HEK293 (cell line): ENCODE measurements at regions of chr19 and their contacts with region 1.

Region 1: DNA sequence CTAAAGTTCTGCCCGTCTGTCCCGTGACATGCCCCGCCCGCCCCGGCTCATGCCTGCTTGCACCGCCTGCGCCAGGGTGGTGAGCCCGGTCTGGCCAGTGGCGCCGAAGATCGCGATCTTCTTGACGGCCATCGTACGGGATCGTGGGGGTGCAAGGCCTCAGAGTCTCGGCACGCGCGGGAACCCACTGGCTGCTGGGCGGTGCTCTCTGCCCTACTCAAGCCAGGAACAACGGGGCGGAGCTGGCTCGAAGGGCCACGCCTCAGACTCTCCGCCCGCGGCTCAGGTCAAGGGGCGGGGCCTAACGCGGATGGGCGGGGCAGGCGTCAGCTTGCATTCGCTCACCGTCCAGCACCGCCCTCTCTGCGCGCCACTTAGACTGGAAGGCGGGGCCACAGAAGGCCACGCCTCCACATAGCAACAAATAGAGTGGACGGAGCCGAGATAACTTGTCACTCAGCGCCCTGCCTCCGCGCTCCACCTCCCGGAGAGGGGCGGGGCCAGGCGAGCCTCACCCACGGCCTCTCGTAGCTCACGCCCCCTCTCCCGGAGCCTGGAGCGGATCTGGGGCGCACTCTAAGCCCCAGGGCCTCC is at the start of gene BLVRB:
- H3K4me3 ChIP-seq: peak within 1 kb of the TSS; percentile 53
- H3K27ac ChIP-seq: peak within 1 kb of the TSS; percentile 20; the same call in 1 of the 2 replicates
- H3K4me1 ChIP-seq: peaks cover 13% of the 10 kb centered on the region
- CTCF ChIP-seq: no peak

Region 2: DNA sequence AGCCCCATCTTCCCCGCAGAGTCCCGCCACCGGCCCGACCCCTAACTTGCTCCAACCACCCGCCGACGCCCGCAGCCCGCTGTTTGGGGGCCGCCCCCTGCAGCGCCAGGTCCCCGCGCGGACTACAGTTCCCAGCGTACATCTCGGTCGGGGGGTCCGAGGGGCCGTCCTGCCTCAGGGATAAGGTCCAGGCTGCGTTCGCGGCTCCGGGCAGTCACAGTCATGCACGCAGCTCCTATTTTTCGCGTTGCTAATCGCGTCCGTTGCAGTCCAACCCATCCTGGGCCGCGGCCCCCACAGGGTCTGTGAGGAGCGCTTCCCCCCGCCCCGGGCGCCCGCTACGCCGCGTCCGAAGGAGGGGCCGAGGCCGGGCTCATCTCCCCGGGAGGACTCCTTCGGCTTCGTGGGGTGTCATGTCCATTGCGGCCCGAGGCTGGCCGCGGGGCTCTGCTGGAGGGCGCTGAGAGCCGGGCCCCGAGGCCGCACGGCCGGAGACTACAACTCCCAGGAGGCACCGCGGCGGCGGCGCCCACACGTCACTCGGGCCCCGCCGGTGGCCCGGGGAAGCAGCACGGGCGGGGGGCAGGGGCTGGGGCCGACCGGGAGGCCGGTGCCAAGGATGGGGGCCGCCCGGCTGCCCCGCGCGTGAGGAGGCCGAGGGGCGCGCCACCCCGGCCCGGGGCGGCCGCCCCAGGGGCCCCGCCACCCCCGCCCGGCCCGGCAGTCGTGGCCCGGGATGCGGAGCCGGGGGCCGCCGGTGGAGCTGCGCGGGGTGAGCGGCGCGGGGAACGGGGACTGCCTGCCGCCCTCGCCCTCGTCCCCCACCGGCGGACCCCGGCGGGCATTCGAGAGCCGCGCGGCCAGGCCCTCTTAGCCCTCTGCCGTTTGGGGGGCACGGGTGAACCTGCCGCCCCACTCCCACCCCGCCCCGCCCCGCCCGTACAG is 274.5 kb before region 1 on chr19 and contains the start of gene MAP3K10:
- CTCF ChIA-PET with region 1: no interaction called
- POLR2A ChIA-PET with region 1: no interaction called
- H3K4me3 ChIP-seq: peak within 1 kb of the TSS; percentile 81
- H3K27ac ChIP-seq: peak within 1 kb of the TSS; percentile 99
- H3K4me1 ChIP-seq: peaks cover 19% of the 10 kb centered on the region
- CTCF ChIP-seq: peak; percentile 51; the same call in 1 of the 2 replicates

Region 3: DNA sequence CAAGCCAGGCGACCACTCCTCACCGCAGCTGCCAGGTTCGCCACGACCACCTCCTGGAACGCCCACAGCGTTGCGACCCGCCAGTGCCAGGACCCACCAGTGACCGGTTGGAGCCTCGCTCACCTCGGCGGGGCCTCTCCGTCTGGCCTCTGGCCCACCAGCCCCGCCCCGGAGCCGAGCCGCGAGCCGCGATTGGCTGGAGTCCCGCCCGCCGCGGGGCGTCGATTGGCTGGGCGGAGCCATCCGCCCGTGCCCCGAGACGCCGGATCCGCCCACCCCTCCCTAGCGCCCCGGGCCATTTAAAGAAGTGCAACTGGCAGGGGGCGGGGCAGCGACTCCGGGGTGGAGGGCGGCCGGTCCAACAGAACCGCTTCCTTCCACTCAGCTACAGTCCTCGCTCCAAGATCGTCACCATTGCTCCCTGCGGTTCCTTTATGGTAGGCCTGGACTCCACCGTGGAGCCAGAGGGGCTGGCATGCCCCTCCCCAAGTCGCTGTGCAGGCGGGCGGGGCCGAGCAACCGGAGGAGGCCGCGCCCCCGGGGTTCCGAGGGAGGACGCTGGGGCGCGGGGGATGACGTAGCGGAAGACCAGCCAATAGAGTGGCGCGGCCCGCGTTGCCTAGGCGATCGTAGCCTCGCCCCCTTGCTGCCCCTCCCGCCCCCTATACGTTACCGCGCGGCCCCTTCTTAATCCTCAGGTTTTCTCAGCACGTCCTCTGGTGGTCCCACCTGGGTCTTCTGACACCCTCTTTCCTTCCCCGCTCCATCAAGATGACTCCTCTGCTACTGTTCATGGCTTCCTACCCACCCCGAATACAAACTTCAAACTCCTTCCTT is 21.2 kb before region 1 on chr19 and contains the start of gene SERTAD3:
- CTCF ChIA-PET with region 1: interaction called, 39 read pairs
- POLR2A ChIA-PET with region 1: interaction called, 61 read pairs
- H3K4me3 ChIP-seq: peak within 1 kb of the TSS; percentile 67
- H3K27ac ChIP-seq: peak within 1 kb of the TSS; percentile 99
- H3K4me1 ChIP-seq: peaks cover 14% of the 10 kb centered on the region
- CTCF ChIP-seq: peak; percentile 97

Region 4: DNA sequence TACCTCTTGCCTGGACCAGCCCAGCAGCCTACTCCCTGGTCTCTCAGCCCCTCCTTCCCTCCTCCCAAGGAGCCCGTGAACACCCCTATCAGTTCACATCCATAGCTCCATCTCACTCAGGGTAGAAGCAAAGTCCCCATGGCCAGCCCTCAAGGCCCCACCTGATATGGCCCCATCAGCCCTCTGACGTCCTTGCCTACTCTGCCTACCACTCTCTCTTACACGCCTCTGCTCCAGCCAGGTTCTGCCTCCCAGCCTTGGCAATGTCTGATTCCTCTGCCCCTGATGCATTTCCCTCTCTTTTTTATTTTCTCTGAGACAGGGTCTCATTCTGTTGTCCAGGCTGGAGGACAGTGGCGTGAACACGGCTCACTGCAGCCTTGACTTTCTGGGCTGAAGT is 13.6 kb before region 1 on chr19:
- CTCF ChIA-PET with region 1: interaction called, 98 read pairs
- POLR2A ChIA-PET with region 1: interaction called, 34 read pairs
- H3K4me3 ChIP-seq: no peak overlapping the region
- H3K27ac ChIP-seq: no peak overlapping the region
- H3K4me1 ChIP-seq: no peaks in the 10 kb centered on the region
- CTCF ChIP-seq: no peak

Region 5: GRCh38 chr19:40512473-40513344 is 47.1 kb after region 1 on chr19:
- CTCF ChIA-PET with region 1: interaction called, 14 read pairs
- POLR2A ChIA-PET with region 1: interaction called, 3 read pairs
- H3K4me3 ChIP-seq: no peak overlapping the region
- H3K27ac ChIP-seq: no peak overlapping the region
- H3K4me1 ChIP-seq: no peaks in the 10 kb centered on the region
- CTCF ChIP-seq: no peak

Region 6: DNA sequence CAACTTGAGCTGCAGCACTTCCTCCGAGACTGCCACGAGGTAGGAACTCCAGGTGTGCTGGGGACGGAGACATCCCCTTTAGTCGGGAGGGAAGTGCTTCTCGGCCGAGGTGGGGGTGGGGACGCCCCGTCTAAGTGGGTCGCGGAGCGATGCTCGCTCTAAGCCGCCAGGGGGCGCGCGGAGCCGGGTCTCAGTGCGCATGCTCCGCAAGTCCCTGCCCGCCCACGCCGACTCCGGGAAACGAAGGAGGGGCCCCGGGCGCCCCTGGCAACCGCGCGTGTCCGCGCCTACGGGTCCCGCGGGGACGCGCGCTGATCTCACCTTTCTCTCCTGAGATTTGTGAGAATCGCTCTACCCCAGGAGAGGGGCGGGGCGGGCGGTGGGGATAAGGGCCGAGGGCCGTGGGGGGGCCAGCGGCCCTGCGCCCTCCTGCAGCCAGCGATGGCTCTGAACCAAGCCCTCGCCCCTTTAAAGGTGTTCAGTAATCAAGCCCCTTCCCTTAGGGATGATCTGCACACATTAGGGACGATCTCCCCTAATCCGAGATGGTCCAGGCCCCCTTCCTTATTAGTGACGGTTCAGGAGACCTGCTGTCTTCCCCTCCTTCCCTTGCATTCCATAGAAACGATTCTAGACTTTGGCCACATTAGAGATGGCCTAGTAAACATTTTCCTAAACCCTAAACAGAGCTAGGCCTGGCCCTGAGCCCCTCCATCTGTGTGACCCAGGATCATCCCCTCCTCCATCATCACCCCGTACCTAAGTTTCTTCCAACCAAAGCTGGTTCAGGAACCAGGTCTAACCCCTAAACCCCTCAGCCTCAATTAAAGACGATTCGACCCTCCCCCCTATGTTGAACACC is 63.7 kb after region 1 on chr19:
- CTCF ChIA-PET with region 1: interaction called, 38 read pairs
- POLR2A ChIA-PET with region 1: interaction called, 3 read pairs
- H3K4me3 ChIP-seq: peak overlapping the region; percentile 19
- H3K27ac ChIP-seq: peak overlapping the region; percentile 39
- H3K4me1 ChIP-seq: peaks cover 17% of the 10 kb centered on the region
- CTCF ChIP-seq: peak; percentile 100

Region 7: GRCh38 chr19:40542202-40542859 is 76.7 kb after region 1 on chr19:
- CTCF ChIA-PET with region 1: interaction called, 12 read pairs
- POLR2A ChIA-PET with region 1: no interaction called
- H3K4me3 ChIP-seq: no peak overlapping the region
- H3K27ac ChIP-seq: no peak overlapping the region
- H3K4me1 ChIP-seq: peaks cover 4% of the 10 kb centered on the region; the same call in 1 of the 2 replicates
- CTCF ChIP-seq: no peak